Kidney (tissue), 22 donors: ENCODE measurements at regions of chr15 and their contacts with region 1.

Region 1: GRCh38 chr15:73633111-73633990 is at the start of gene NPTN:
- DNase-seq: peak; percentile 99 to 100 (median 99)
- H3K4me3 ChIP-seq: peak within 1 kb of the TSS; percentile 85 to 88 (median 88)
- H3K27ac ChIP-seq: peak within 1 kb of the TSS; percentile 75 to 87
- H3K4me1 ChIP-seq: peaks cover 10 to 19% (median 13%) of the 10 kb centered on the region in 3 donors
- H3K27me3 ChIP-seq: no peaks in the 10 kb centered on the region
- CTCF ChIP-seq: no peak
- total RNA-seq, gene NPTN: 130 TPM

Region 2: GRCh38 chr15:72887376-72887775 is 746.0 kb before region 1 on chr15:
- intact Hi-C with region 1: no loop called
- DNase-seq: no peak
- H3K4me3 ChIP-seq: no peak overlapping the region
- H3K27ac ChIP-seq: no peak overlapping the region
- H3K4me1 ChIP-seq: no peaks in the 10 kb centered on the region
- H3K27me3 ChIP-seq: no peaks in the 10 kb centered on the region
- CTCF ChIP-seq: no peak

Region 3: GRCh38 chr15:73560501-73561117 is 72.7 kb before region 1 on chr15:
- intact Hi-C with region 1: loop called (anchors 10 kb)
- DNase-seq: peak in 2 of 5 donors; percentile 82 to 90
- H3K4me3 ChIP-seq: no peak overlapping the region
- H3K27ac ChIP-seq: no peak overlapping the region
- H3K4me1 ChIP-seq: no peaks in the 10 kb centered on the region
- H3K27me3 ChIP-seq: no peaks in the 10 kb centered on the region
- CTCF ChIP-seq: peak; percentile 49

Region 4: GRCh38 chr15:73704869-73705645 is 71.7 kb after region 1 on chr15:
- intact Hi-C with region 1: no loop called
- DNase-seq: peak in 4 of 5 donors; percentile 56 to 76 (median 70)
- H3K4me3 ChIP-seq: no peak overlapping the region
- H3K27ac ChIP-seq: no peak overlapping the region
- H3K4me1 ChIP-seq: no peaks in the 10 kb centered on the region
- H3K27me3 ChIP-seq: no peaks in the 10 kb centered on the region
- CTCF ChIP-seq: peak; percentile 67